ENCODE measurements at regions of chr6 and their contacts with region 1.

Region 1: DNA sequence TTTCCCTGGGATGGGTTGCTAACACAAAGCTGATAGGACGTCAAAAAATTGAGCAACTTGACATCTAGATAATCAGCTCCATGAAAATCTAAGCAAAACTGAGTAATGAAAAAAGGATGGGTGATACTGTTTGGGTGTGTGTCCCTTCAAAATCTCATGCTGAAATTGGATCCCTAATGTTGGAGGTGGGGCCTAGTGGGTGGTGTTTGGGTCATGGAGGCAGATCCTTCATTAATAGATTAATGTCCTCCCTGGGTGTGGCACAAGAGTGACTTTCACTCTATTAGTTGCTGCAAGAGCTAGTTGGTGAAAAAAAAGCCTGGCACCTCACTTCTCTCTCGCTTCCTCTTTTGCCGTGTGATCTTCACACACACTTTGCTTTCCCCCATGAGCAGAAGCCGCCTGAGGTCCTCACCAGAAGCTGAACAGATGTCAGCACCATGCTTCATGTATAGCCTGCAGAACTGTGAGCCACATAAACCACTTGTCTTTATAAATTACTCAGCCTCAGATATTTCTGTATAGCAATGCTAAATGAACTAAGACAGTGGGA is 160.9 kb downstream of the FRK start:
- DNase-seq: no peak
- H3K4me3 ChIP-seq: no peak overlapping the region
- H3K27ac ChIP-seq: no peak overlapping the region
- H3K4me1 ChIP-seq: no peaks in the 10 kb centered on the region
- H3K27me3 ChIP-seq: no peaks in the 10 kb centered on the region
- CTCF ChIP-seq: no peak
- EP300 ChIP-seq: no peak
- POLR2A ChIP-seq: no peak

Region 2: GRCh38 chr6:114747987-114748630 is 1151.7 kb before region 1 on chr6:
- intact Hi-C with region 1: loop called (anchors 10 kb)
- DNase-seq: peak; percentile 56 to 81
- H3K4me3 ChIP-seq: no peak overlapping the region
- H3K27ac ChIP-seq: no peak overlapping the region
- H3K4me1 ChIP-seq: no peaks in the 10 kb centered on the region
- H3K27me3 ChIP-seq: no peaks in the 10 kb centered on the region
- CTCF ChIP-seq: peak in 4 of 7 experiments; percentile 40 to 70 (median 50)
- EP300 ChIP-seq: no peak
- POLR2A ChIP-seq: no peak

Region 3: GRCh38 chr6:115969207-115969929 is 69.6 kb after region 1 on chr6:
- intact Hi-C with region 1: no loop called
- DNase-seq: no peak
- H3K4me3 ChIP-seq: no peak overlapping the region
- H3K27ac ChIP-seq: no peak overlapping the region
- H3K4me1 ChIP-seq: peaks cover 0 to 7% (median 2%) of the 10 kb centered on the region in 4 donors
- H3K27me3 ChIP-seq: no peaks in the 10 kb centered on the region
- CTCF ChIP-seq: no peak
- EP300 ChIP-seq: no peak
- POLR2A ChIP-seq: no peak

Measured in stomach (tissue), 19 donors.